Adrenal gland (tissue), 19 donors: ENCODE measurements at regions of chr22 and their contacts with region 1.

Region 1: GRCh38 chr22:28594797-28595462 is 84.7 kb downstream of the TTC28 start:
- DNase-seq: no peak
- H3K4me3 ChIP-seq: no peak overlapping the region
- H3K27ac ChIP-seq: no peak overlapping the region
- H3K4me1 ChIP-seq: peaks cover 0 to 3% of the 10 kb centered on the region in 2 donors
- H3K27me3 ChIP-seq: no peaks in the 10 kb centered on the region
- CTCF ChIP-seq: peak; percentile 61 to 94 (median 86)
- POLR2A ChIP-seq: no peak

Region 2: GRCh38 chr22:28019881-28020871 is 574.8 kb before region 1 on chr22:
- intact Hi-C with region 1: loop called in 1 of 2 experiments (anchors 10 kb)
- DNase-seq: peak; percentile 56 to 91 (median 79)
- H3K4me3 ChIP-seq: no peak overlapping the region
- H3K27ac ChIP-seq: peak overlapping the region in 2 of 5 donors; percentile 29 to 66
- H3K4me1 ChIP-seq: peaks cover 0 to 26% of the 10 kb centered on the region in 2 donors
- H3K27me3 ChIP-seq: no peaks in the 10 kb centered on the region
- CTCF ChIP-seq: peak; percentile 83 to 93 (median 89)
- POLR2A ChIP-seq: no peak

Region 3: GRCh38 chr22:28051787-28052356 is 543.1 kb before region 1 on chr22:
- intact Hi-C with region 1: loop called in 1 of 2 experiments (anchors 5 kb)
- DNase-seq: peak; percentile 50 to 89 (median 74)
- H3K4me3 ChIP-seq: no peak overlapping the region
- H3K27ac ChIP-seq: no peak overlapping the region
- H3K4me1 ChIP-seq: no peaks in the 10 kb centered on the region
- H3K27me3 ChIP-seq: no peaks in the 10 kb centered on the region
- CTCF ChIP-seq: peak; percentile 73 to 87 (median 80)
- POLR2A ChIP-seq: no peak

Region 4: GRCh38 chr22:28426346-28427132 is 168.4 kb before region 1 on chr22:
- intact Hi-C with region 1: no loop called
- DNase-seq: no peak
- H3K4me3 ChIP-seq: no peak overlapping the region
- H3K27ac ChIP-seq: no peak overlapping the region
- H3K4me1 ChIP-seq: peaks cover 0 to 10% of the 10 kb centered on the region in 2 donors
- H3K27me3 ChIP-seq: no peaks in the 10 kb centered on the region
- CTCF ChIP-seq: no peak
- POLR2A ChIP-seq: no peak

Region 5: DNA sequence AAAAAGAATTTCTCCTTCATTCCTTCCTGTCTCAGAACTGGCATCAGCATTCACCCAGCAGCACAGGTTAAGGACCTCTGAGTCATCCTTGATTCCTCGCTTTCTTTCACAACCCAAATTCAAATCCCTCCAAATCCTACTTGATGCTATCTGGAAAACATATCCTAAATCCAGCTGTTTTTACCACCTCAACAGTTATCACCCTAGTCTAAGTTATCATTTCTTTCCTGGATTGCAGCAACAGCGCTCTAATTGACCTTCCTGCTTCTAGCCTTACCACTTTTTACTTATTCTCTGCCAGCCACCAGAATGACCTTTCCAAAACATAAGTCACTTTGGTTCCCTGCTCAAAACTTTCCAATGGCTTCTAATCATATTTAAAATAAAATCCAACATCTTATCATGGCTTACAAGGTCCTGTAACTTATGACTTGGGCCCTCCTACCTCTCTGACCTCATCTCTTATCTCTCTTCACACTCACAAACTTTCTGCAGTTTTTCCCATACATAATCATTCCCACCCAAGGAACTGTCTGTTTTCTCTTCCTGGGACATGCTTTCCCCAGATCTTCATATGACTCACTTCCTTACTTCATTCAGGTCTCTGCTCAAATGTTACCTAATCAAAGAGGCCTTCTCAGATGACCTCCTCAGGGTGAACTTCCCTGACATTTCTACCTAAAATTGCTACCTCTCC is 34.7 kb before region 1 on chr22:
- intact Hi-C with region 1: no loop called
- DNase-seq: peak in 3 of 7 donors; percentile 17 to 44 (median 36)
- H3K4me3 ChIP-seq: no peak overlapping the region
- H3K27ac ChIP-seq: peak overlapping the region in 4 of 5 donors; percentile 53 to 70 (median 59)
- H3K4me1 ChIP-seq: peaks cover 7 to 12% of the 10 kb centered on the region in 2 donors
- H3K27me3 ChIP-seq: no peaks in the 10 kb centered on the region
- CTCF ChIP-seq: no peak
- POLR2A ChIP-seq: no peak

Region 6: DNA sequence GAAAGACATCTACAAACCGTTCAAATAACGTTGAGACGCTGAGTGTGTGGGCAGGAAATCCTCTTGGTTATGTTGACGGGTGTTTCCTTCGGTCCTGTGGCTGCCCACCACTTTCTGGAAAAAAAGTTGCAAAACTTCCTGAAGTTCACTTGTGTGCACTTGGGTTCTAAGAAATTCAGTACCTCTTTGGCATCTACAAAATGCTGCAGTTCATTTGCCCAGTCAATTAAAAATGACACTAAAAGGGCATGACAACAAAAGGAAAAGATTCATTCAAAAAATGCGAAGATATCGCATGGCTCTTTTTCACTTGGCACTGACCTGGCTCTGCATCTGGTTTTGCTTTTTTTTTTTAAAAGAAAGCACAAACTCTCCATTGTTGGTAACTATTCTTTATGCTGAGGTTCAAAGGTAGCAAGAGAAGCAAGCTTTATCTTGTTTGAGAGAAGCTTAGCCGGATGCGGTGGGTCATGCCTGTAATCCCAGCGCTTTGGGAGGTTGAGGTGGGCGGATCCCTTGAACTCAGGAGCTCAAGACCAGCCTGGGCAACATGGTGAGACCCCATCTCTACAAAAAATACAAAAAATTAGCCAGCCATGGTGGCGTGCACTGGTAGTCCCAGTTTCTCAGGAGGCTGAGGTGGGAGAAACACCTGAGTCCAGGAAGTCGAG is 216.0 kb after region 1 on chr22:
- intact Hi-C with region 1: no loop called
- DNase-seq: peak in 2 of 7 donors; percentile 36 to 60
- H3K4me3 ChIP-seq: no peak overlapping the region
- H3K27ac ChIP-seq: peak overlapping the region in 4 of 5 donors; percentile 24 to 68 (median 48)
- H3K4me1 ChIP-seq: peaks cover 26 to 33% of the 10 kb centered on the region in 2 donors
- H3K27me3 ChIP-seq: no peaks in the 10 kb centered on the region
- CTCF ChIP-seq: no peak
- POLR2A ChIP-seq: no peak

Region 7: GRCh38 chr22:28829358-28830181 is 234.6 kb after region 1 on chr22:
- intact Hi-C with region 1: loop called (anchors 5 kb)
- DNase-seq: peak; percentile 78 to 94 (median 85)
- H3K4me3 ChIP-seq: no peak overlapping the region
- H3K27ac ChIP-seq: peak overlapping the region in 3 of 5 donors; percentile 27 to 67 (median 45)
- H3K4me1 ChIP-seq: peaks cover 0 to 21% of the 10 kb centered on the region in 2 donors
- H3K27me3 ChIP-seq: no peaks in the 10 kb centered on the region
- CTCF ChIP-seq: peak; percentile 96 to 99 (median 98)
- POLR2A ChIP-seq: no peak